Activated CD4-positive, alpha-beta T cell treated with anti-CD3 and anti-CD28 coated beads, Interleukin-2, amount 10 ng/mL, durations not matched to agents 24 days and 14 days (primary cell): ENCODE measurements at regions of chr12 and their contacts with region 1.

Region 1: DNA sequence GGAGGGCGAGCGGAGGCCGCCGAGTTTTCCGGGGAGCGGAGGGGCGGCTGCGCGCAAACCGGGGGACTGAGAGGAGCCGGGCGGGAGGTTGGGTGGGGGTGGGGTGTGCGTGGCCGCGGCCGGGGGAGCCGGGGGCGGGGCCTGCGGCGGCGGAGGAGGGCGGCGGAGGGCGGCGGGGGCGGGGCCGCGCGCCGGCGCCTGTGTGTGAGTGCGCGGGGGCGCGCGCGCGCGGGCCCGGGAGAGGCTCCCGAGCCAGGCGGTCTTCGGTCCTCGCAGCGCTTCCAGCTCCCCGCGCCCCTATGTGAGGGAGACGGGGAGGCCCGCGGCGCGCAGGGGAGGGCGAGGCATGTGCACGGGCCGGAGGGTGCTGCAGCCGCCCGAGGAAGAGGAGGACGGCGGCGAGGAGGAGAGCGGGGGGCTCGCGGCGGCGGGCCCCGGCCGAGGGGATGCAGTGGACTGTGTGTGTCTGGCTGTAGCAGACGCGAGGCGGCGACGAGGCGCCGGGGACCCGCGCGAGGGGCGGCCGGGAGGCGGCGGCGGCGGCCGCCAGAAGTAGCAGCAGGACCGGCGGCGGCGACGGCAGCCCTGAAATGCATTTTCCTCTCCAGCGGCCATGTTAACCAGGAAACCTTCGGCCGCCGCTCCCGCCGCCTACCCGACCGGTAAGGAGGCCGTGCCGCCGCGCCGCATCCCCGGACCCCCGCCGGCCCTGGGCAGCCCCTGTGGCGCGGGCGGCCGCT is at the start of gene DYRK2:
- DNase-seq: peak; percentile 91
- H3K4me3 Mint-ChIP-seq: peak within 1 kb of the TSS; percentile 97
- H3K27ac Mint-ChIP-seq: peak within 1 kb of the TSS; percentile 93
- H3K4me1 Mint-ChIP-seq: peaks cover 34% of the 10 kb centered on the region
- H3K27me3 Mint-ChIP-seq: peaks cover 6% of the 10 kb centered on the region
- total RNA-seq, gene DYRK2: 35.5 and 37.8 TPM in 2 replicates

Region 2: DNA sequence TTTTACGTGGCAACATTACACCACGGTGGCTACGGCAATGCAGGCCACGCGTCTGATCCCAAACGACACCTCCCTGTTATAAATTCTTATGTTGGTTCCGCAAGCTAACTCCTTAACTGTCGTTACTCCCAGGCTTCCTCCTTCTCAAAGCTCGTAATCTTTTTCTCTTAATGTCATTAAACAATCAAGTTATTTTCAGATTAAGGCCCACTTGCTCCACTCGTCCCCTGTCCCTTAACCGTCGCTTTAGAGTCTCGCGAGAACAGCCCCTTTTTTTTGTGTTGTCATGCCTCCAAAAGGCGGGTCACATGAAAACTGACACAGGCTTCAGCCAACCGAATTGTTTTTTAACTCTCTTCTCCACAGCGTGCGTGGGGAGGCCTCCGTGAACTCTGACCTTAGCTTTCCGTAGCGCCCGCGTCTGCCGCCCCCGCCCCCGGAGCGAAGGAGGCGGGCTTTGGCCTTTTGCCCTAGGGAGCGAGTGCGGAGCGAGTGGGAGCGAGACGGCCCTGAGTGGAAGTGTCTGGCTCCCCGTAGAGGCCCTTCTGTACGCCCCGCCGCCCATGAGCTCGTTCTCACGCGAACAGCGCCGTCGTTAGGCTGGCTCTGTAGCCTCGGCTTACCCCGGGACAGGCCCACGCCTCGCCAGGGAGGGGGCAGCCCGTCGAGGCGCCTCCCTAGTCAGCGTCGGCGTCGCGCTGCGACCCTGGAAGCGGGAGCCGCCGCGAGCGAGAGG is 379.6 kb before region 1 on chr12 and contains the start of gene CAND1:
- intact Hi-C with region 1: loop called (anchors 1 kb)
- DNase-seq: peak; percentile 99
- H3K4me3 Mint-ChIP-seq: peak within 1 kb of the TSS; percentile 90
- H3K27ac Mint-ChIP-seq: peak within 1 kb of the TSS; percentile 100
- H3K4me1 Mint-ChIP-seq: peaks cover 30% of the 10 kb centered on the region
- H3K27me3 Mint-ChIP-seq: no peaks in the 10 kb centered on the region
- total RNA-seq, gene CAND1: 202 and 216 TPM in 2 replicates

Region 3: GRCh38 chr12:67452119-67452805 is 196.4 kb before region 1 on chr12:
- intact Hi-C with region 1: loop called (anchors 5 kb)
- DNase-seq: no peak
- H3K4me3 Mint-ChIP-seq: peak overlapping the region; percentile 16
- H3K27ac Mint-ChIP-seq: peak overlapping the region; percentile 85
- H3K4me1 Mint-ChIP-seq: peaks cover 40% of the 10 kb centered on the region
- H3K27me3 Mint-ChIP-seq: peaks cover 44% of the 10 kb centered on the region

Region 4: DNA sequence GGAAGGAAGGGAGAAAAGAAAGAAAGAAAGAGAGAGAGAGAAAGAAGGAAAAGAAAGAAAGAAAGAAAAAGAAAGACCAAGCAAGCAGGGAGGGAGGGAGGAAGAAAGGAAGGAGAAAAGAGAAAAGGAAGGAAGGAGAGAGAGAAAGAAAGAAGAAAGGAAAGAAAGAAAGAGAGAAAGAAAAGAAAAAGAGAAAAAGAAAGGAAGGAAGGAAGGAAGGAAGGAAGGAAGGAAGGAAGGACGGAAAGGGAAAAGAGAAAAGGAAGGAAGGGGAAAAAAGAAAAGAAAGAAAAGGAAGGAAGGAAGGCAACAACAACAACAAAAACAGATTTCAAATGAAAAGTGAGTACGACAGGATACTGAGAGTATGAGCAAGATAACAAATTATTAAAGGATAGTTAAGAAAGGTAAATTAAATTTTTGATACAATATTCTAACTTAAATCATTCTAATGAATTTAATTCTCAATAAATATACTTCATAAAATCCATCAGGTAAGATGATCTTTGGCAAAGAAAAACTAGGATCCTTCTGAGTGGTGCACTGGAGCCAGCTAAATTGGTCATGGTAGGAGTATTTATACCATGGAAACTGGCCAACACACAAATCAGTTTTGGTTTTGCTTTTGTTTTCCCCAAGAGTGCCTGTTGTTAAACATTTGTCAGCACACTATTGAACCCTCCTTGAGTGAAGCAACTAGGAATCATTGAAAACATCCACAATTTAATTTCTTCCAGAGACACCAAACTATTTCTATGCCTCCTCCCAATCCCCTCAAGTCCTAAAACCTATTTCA is 56.3 kb before region 1 on chr12:
- intact Hi-C with region 1: loop called (anchors 5 kb)
- DNase-seq: peak; percentile 82
- H3K4me3 Mint-ChIP-seq: peak overlapping the region; percentile 41
- H3K27ac Mint-ChIP-seq: peak overlapping the region; percentile 74
- H3K4me1 Mint-ChIP-seq: peaks cover 42% of the 10 kb centered on the region
- H3K27me3 Mint-ChIP-seq: peaks cover 4% of the 10 kb centered on the region

Region 5: GRCh38 chr12:67698672-67699581 is 50.2 kb after region 1 on chr12:
- intact Hi-C with region 1: loop called (anchors 1 kb)
- DNase-seq: peak; percentile 83
- H3K4me3 Mint-ChIP-seq: peak overlapping the region; percentile 70
- H3K27ac Mint-ChIP-seq: peak overlapping the region; percentile 65
- H3K4me1 Mint-ChIP-seq: peaks cover 40% of the 10 kb centered on the region
- H3K27me3 Mint-ChIP-seq: peaks cover 58% of the 10 kb centered on the region

Region 6: DNA sequence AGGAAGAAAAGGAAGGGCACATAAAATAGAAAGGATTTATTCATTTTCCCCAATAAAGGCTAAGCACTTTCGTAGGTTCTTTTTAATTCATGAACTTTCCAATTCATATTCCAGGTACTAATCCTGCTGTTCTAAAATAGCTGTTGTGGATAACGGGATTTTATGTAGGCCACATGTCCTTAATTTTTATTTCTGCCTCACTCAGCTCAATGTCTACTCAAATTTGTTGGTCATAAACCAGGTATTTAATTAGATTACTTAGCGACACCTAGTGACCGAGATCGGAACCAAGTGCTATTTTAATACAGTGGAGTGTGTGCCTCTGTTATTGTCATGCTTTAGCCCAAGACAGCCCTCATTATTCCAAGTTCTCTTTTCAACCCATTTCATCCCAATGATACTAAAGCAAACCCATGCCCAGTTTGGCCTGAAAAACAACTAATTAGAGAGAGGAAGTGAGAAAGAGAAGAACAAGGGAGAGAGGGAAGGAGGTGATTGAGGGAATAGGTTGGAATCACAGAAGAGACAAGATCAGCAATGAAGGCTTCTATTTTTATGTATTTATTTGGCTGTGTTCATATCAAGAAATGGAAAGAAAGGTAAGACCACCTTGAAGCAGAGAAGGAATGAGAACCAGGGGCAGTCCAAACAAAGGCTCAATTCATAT is 294.7 kb after region 1 on chr12:
- intact Hi-C with region 1: loop called (anchors 1 kb)
- DNase-seq: peak; percentile 89
- H3K4me3 Mint-ChIP-seq: no peak overlapping the region
- H3K27ac Mint-ChIP-seq: no peak overlapping the region
- H3K4me1 Mint-ChIP-seq: no peaks in the 10 kb centered on the region
- H3K27me3 Mint-ChIP-seq: peaks cover 27% of the 10 kb centered on the region